CD4-positive, alpha-beta T cell (primary cell): ENCODE measurements at regions of chr2 and their contacts with region 1.

Region 1: GRCh38 chr2:55419679-55420438 is at the start of gene CCDC88A:
- DNase-seq: peak; percentile 76 to 96 (median 84)
- ATAC-seq: peak; percentile 76
- H3K4me3 ChIP-seq: peak within 1 kb of the TSS; percentile 94
- H3K4me3 Mint-ChIP-seq: peak within 1 kb of the TSS; percentile 95
- H3K27ac ChIP-seq: peak within 1 kb of the TSS; percentile 56 to 81
- H3K27ac Mint-ChIP-seq: peak within 1 kb of the TSS; percentile 79
- H3K4me1 ChIP-seq: peaks cover 12% of the 10 kb centered on the region
- H3K4me1 Mint-ChIP-seq: peaks cover 44% of the 10 kb centered on the region
- H3K27me3 ChIP-seq: no peaks in the 10 kb centered on the region
- H3K27me3 Mint-ChIP-seq: no peaks in the 10 kb centered on the region
- CTCF ChIP-seq: no peak
- total RNA-seq, gene CCDC88A: 11.0 to 12.9 TPM

Region 2: GRCh38 chr2:53767405-53768241 is 1652.2 kb before region 1 on chr2 and contains the start of gene CHAC2:
- CTCF ChIA-PET with region 1: no interaction called
- POLR2A ChIA-PET with region 1: no interaction called
- intact Hi-C with region 1: loop called in 1 of 2 experiments (anchors 10 kb)
- DNase-seq: peak; percentile 68 to 93 (median 78)
- ATAC-seq: peak; percentile 88
- H3K4me3 ChIP-seq: peak within 1 kb of the TSS; percentile 77
- H3K4me3 Mint-ChIP-seq: peak within 1 kb of the TSS; percentile 95
- H3K27ac ChIP-seq: peak within 1 kb of the TSS; percentile 75 to 83
- H3K27ac Mint-ChIP-seq: peak within 1 kb of the TSS; percentile 91
- H3K4me1 ChIP-seq: peaks cover 13% of the 10 kb centered on the region
- H3K4me1 Mint-ChIP-seq: peaks cover 41% of the 10 kb centered on the region
- H3K27me3 ChIP-seq: no peaks in the 10 kb centered on the region
- H3K27me3 Mint-ChIP-seq: no peaks in the 10 kb centered on the region
- CTCF ChIP-seq: peak; percentile 59
- total RNA-seq, gene CHAC2: 0.47 to 0.85 TPM

Region 3: GRCh38 chr2:55010149-55010591 is 409.7 kb before region 1 on chr2:
- CTCF ChIA-PET with region 1: no interaction called
- POLR2A ChIA-PET with region 1: no interaction called
- intact Hi-C with region 1: loop called in 1 of 2 experiments (anchors 10 kb)
- DNase-seq: peak; percentile 22 to 81 (median 38)
- ATAC-seq: peak; percentile 94
- H3K4me3 ChIP-seq: peak overlapping the region; percentile 54
- H3K4me3 Mint-ChIP-seq: peak overlapping the region; percentile 92
- H3K27ac ChIP-seq: peak overlapping the region; percentile 25 to 36
- H3K27ac Mint-ChIP-seq: peak overlapping the region; percentile 87
- H3K4me1 ChIP-seq: peaks cover 9% of the 10 kb centered on the region
- H3K4me1 Mint-ChIP-seq: peaks cover 76% of the 10 kb centered on the region
- H3K27me3 ChIP-seq: no peaks in the 10 kb centered on the region
- H3K27me3 Mint-ChIP-seq: no peaks in the 10 kb centered on the region
- CTCF ChIP-seq: no peak

Region 4: GRCh38 chr2:55268907-55269644 is 150.8 kb before region 1 on chr2 and contains the start of gene MTIF2:
- CTCF ChIA-PET with region 1: no interaction called
- POLR2A ChIA-PET with region 1: no interaction called
- intact Hi-C with region 1: loop called in 1 of 2 experiments (anchors 5 kb)
- DNase-seq: peak; percentile 68 to 93 (median 82)
- ATAC-seq: peak; percentile 86
- H3K4me3 ChIP-seq: peak within 1 kb of the TSS; percentile 87
- H3K4me3 Mint-ChIP-seq: peak within 1 kb of the TSS; percentile 96
- H3K27ac ChIP-seq: peak within 1 kb of the TSS; percentile 66 to 84
- H3K27ac Mint-ChIP-seq: peak within 1 kb of the TSS; percentile 95
- H3K4me1 ChIP-seq: peaks cover 15% of the 10 kb centered on the region
- H3K4me1 Mint-ChIP-seq: peaks cover 19% of the 10 kb centered on the region
- H3K27me3 ChIP-seq: no peaks in the 10 kb centered on the region
- H3K27me3 Mint-ChIP-seq: no peaks in the 10 kb centered on the region
- CTCF ChIP-seq: no peak
- total RNA-seq, gene MTIF2: 13.0 to 15.6 TPM

Region 5: DNA sequence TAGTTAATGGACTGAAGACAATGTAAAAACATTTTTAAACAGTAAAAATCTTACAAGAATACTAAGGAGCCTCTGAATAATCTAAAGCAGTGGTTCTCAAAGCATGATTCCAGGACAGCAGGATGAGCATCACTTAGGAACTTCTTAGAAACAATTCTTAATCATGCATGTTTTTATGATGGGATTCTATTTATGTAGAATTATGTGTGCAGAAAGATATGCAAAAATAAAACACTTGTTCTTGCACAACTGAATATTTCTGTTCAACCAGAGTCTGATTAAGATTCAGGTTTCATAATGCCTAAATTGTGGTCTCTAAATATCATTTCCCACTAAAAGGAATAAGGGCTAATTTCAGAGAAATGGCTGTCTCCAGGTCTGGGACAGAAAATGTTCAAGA is 81.6 kb before region 1 on chr2:
- CTCF ChIA-PET with region 1: no interaction called
- POLR2A ChIA-PET with region 1: no interaction called
- intact Hi-C with region 1: no loop called
- DNase-seq: no peak
- ATAC-seq: no peak
- H3K4me3 ChIP-seq: no peak overlapping the region
- H3K4me3 Mint-ChIP-seq: no peak overlapping the region
- H3K27ac ChIP-seq: no peak overlapping the region
- H3K27ac Mint-ChIP-seq: no peak overlapping the region
- H3K4me1 ChIP-seq: no peaks in the 10 kb centered on the region
- H3K4me1 Mint-ChIP-seq: no peaks in the 10 kb centered on the region
- H3K27me3 ChIP-seq: no peaks in the 10 kb centered on the region
- H3K27me3 Mint-ChIP-seq: no peaks in the 10 kb centered on the region
- CTCF ChIP-seq: no peak

Region 6: GRCh38 chr2:55519938-55520885 is 100.4 kb after region 1 on chr2:
- CTCF ChIA-PET with region 1: no interaction called
- POLR2A ChIA-PET with region 1: interaction called, 15 read pairs
- intact Hi-C with region 1: loop called (anchors 5 kb)
- DNase-seq: peak; percentile 9 to 63 (median 36)
- ATAC-seq: peak; percentile 32
- H3K4me3 ChIP-seq: peak overlapping the region; percentile 73
- H3K4me3 Mint-ChIP-seq: peak overlapping the region; percentile 96
- H3K27ac ChIP-seq: peak overlapping the region; percentile 86 to 89
- H3K27ac Mint-ChIP-seq: peak overlapping the region; percentile 98
- H3K4me1 ChIP-seq: peaks cover 11% of the 10 kb centered on the region
- H3K4me1 Mint-ChIP-seq: peaks cover 17% of the 10 kb centered on the region
- H3K27me3 ChIP-seq: no peaks in the 10 kb centered on the region
- H3K27me3 Mint-ChIP-seq: no peaks in the 10 kb centered on the region
- CTCF ChIP-seq: no peak